OCI-LY7 (cell line): ENCODE measurements at regions of chr7 and their contacts with region 1.

Region 1: DNA sequence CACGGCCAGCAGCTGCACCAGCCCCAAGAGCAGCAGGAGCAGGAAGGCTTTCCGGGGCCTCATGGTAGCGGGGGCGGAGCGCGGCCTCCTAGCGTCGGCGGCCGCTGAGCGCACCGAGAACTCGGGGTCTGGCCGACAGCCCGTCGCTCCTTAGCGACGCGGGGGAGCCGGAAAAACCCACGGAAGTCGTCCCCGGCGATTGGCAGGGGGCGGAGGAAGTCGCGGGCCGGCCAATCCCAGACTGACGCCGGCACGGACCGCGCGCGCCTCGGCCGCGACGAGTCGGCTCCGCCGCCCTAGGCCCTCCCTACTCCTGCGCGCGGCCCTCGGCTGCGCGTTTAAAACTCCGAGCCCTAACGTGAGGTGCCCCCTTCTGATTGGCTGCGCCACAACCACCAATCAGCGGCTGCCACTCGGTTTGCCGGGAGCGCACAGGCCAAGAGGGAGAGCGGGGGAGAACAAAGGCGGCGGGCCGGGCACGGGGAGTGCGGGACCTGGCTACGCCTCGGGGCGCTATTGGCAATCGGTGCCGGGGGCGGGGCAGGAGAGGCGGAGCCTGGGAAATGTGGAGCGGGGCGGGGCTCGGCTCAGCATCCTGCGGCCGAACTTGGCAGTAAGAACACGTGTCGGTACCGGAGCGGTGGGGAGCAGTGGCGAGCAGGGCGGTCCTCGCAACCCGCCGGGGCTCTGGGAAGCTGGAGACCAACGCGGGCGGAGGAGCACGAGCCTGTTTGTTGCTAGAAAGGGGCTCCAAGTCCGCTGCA is at the start of gene PDIA4:
- DNase-seq: peak; percentile 98
- H3K4me3 ChIP-seq: peak within 1 kb of the TSS; percentile 96
- H3K27ac ChIP-seq: peak within 1 kb of the TSS; percentile 84
- H3K4me1 ChIP-seq: peaks cover 31% of the 10 kb centered on the region
- CTCF ChIP-seq: no peak
- total RNA-seq, gene PDIA4: 130 TPM in 2 replicates

Region 2: GRCh38 chr7:148987010-148987750 is 41.3 kb before region 1 on chr7:
- CTCF ChIA-PET with region 1: no interaction called
- POLR2A ChIA-PET with region 1: interaction called, 6 read pairs
- intact Hi-C with region 1: loop called (anchors 1 kb)
- DNase-seq: peak; percentile 94
- H3K4me3 ChIP-seq: peak overlapping the region; percentile 87
- H3K27ac ChIP-seq: peak overlapping the region; percentile 46
- H3K4me1 ChIP-seq: peaks cover 22% of the 10 kb centered on the region
- CTCF ChIP-seq: no peak

Region 3: DNA sequence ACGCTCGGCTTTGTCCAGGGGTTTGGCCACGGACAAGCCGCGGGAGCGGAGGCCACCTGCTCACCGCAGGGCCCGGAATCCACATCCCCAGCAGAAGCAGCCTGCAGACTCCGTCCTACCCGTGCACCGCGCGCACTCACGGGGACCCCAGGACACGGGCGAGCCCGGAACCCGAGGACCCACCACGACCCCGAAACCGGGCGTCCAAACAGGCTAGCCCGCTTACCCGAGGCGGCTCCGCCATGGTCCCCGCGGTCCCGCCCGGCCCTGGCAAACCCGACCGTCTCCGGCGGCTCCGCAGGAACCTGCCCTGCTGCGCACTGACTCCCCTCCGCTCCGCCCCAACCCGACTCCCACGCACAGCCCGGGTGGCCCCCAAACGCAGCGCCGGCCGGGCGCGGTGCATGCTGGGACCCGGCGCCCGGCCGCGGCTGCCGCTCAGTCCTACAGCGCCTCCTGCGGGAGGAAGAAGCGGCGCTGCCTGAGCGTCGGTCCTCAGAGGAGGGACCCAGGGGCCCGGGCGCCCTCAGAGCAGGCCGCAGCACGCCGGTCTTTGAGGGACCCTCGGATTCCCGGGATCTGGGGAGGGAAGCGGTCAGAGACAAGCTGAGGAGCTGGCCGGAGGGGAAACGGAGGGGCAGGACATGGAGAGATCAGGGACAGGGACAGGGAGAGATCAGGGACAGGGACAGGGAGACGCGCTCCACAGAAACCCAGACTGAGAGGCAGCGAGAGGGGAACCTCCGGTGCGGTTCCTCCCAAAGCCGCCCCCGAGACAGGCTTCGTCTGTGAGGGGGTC is 62.1 kb after region 1 on chr7 and contains the start of gene ZNF786:
- CTCF ChIA-PET with region 1: no interaction called
- POLR2A ChIA-PET with region 1: no interaction called
- intact Hi-C with region 1: loop called (anchors 1 kb)
- DNase-seq: peak; percentile 94
- H3K4me3 ChIP-seq: peak within 1 kb of the TSS; percentile 95
- H3K27ac ChIP-seq: peak within 1 kb of the TSS; percentile 76
- H3K4me1 ChIP-seq: peaks cover 28% of the 10 kb centered on the region
- CTCF ChIP-seq: peak; percentile 83
- total RNA-seq, gene ZNF786: 3.9 and 5.1 TPM in 2 replicates

Region 4: GRCh38 chr7:149147072-149147751 is 118.7 kb after region 1 on chr7 and contains the start of gene ZNF398:
- CTCF ChIA-PET with region 1: no interaction called
- POLR2A ChIA-PET with region 1: no interaction called
- intact Hi-C with region 1: loop called (anchors 1 kb)
- DNase-seq: peak; percentile 88
- H3K4me3 ChIP-seq: peak within 1 kb of the TSS; percentile 93
- H3K27ac ChIP-seq: peak within 1 kb of the TSS; percentile 82
- H3K4me1 ChIP-seq: peaks cover 29% of the 10 kb centered on the region
- CTCF ChIP-seq: peak; percentile 79
- total RNA-seq, gene ZNF398: 11.4 and 11.8 TPM in 2 replicates